ENCODE measurements at regions of chr3 and their contacts with region 1.

Region 1: DNA sequence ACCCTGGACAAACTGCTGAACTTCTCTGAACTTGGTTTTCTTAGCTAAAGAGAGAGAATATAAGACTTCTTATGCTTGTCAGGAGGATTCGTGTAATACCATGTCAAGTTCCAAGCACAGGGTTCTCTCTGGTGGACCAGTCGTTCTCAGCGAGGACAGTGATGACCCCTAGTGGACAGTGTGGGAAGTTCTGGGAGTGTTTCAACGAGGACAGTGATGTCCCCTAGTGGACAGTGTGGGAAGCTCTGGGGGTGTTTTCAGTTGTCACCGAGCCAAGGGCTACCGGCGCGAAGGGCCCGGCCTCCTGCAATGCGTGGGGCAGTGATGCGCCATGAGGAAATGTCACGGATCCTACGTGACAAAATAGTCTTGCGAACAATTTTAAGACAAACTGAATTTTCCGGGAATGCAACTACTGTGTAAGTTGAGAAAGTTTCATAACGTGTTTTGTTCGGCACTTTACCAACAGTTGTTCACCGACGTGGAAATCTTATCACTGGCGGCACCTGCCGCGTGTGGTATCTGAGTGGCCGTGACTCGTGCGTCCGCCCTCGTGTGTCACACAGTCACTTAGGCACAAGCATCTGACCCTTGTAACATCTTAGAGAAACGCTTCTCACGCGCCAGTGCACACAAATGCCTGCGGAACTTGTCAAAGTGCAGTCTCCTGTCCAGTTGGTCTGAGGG is 39.3 kb upstream of the MUC4 start:
- DNase-seq: peak; percentile 94
- ATAC-seq: peak; percentile 90
- H3K4me3 Mint-ChIP-seq: no peak overlapping the region
- H3K27ac Mint-ChIP-seq: no peak overlapping the region
- H3K4me1 Mint-ChIP-seq: peaks cover 20% of the 10 kb centered on the region
- H3K27me3 Mint-ChIP-seq: peaks cover 6% of the 10 kb centered on the region

Region 2: DNA sequence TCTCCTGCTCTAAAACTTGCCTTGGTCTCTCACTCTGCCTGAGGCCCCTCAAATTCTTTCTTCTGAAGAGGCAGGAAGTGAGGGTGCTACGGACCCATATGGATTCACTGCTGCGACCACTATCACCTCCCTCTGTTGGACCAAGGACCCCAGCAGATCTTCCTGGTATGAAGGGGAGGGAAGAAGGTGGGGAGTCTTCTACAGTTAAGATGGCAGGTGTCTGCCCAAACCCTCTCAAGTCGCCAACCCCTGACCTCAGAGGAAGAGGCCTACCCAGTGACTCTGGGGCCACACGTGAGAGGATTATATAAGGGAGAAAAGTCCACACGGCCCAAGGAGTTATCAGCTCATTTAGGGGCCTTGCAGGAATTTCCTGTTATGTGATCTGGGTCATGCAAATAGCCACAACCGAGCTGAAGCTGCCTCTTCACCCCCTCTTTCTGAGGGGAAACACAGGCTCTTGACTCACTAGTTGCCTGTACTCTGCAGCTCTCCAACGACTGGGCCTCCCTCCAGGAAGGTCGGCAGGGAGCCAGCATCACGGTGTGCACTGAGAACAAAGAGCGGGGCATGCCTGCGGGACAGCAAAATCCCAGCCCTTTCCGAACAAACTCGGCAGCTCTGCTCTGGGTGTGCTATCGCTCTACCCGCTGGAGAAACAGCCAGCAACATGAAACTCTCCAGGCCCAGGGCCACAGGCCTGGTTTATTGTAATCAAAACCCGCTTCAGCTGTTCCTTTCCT is 696.0 kb before region 1 on chr3:
- CTCF ChIA-PET with region 1: no interaction called
- DNase-seq: no peak
- ATAC-seq: no peak
- H3K4me3 Mint-ChIP-seq: no peak overlapping the region
- H3K27ac Mint-ChIP-seq: no peak overlapping the region
- H3K4me1 Mint-ChIP-seq: peaks cover 25% of the 10 kb centered on the region
- H3K27me3 Mint-ChIP-seq: no peaks in the 10 kb centered on the region

Region 3: DNA sequence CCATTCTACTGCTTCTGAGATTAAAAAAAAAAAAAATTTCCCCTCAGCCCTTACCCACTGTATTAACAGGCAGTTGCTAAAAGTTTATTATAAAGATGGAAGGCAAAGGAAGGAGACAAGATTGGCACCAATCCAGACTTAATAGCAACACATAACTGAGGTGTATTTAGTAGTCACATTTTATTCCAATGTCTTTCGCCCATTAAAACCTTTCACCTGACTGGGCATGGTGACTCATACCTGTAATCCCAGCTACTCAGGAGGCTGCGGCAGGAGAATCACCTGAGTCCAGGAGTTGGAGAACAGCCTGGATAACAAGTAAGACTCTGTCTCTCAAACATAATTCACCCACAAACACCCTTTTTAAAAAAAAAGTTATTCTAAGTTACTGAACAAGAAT is 412.6 kb before region 1 on chr3:
- CTCF ChIA-PET with region 1: no interaction called
- DNase-seq: no peak
- ATAC-seq: no peak
- H3K4me3 Mint-ChIP-seq: no peak overlapping the region
- H3K27ac Mint-ChIP-seq: no peak overlapping the region
- H3K4me1 Mint-ChIP-seq: peaks cover 25% of the 10 kb centered on the region
- H3K27me3 Mint-ChIP-seq: no peaks in the 10 kb centered on the region

Region 4: GRCh38 chr3:195794708-195795107 is 56.3 kb before region 1 on chr3:
- CTCF ChIA-PET with region 1: interaction called, 11 read pairs
- DNase-seq: no peak
- ATAC-seq: no peak
- H3K4me3 Mint-ChIP-seq: no peak overlapping the region
- H3K27ac Mint-ChIP-seq: no peak overlapping the region
- H3K4me1 Mint-ChIP-seq: peaks cover 6% of the 10 kb centered on the region
- H3K27me3 Mint-ChIP-seq: peaks cover 19% of the 10 kb centered on the region

Region 5: DNA sequence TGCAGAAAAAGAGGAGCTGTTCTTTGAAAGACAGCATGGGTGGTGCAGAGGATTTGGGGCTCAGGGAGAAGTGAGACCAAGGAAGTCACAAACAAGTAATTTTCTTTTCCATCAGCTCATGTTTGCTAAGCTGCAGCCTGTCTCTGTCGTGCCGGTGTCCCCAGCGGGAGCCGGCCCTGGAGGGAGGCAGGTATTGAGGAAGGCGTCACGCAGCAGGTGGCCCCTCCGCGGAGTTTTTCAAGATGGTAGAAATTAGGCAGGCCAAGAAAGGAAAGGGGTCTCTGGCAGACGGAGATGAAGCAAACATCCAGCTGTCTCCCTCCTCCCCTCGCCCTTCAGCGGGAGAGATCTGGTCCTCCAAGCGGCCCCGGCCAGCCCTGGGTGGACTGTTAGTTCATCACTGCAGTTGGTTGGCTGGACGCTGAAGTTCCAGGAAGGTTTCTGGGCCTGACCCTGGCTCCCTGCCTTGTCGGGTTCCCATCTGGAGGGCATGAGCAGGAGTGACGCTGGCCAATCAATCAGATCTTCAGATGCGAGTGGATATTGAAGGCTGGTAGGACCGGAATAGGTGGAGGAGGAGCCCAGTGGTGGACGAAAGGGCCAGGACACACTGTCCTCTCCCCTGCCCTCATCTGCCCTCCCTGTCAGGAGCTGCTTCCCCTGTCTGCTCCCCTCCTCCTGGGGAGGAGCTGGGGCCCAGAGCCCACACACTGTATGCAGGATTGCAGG is 11.6 kb before region 1 on chr3:
- CTCF ChIA-PET with region 1: interaction called, 48 read pairs
- DNase-seq: no peak
- ATAC-seq: no peak
- H3K4me3 Mint-ChIP-seq: no peak overlapping the region
- H3K27ac Mint-ChIP-seq: no peak overlapping the region
- H3K4me1 Mint-ChIP-seq: no peaks in the 10 kb centered on the region
- H3K27me3 Mint-ChIP-seq: peaks cover 8% of the 10 kb centered on the region

Region 6: DNA sequence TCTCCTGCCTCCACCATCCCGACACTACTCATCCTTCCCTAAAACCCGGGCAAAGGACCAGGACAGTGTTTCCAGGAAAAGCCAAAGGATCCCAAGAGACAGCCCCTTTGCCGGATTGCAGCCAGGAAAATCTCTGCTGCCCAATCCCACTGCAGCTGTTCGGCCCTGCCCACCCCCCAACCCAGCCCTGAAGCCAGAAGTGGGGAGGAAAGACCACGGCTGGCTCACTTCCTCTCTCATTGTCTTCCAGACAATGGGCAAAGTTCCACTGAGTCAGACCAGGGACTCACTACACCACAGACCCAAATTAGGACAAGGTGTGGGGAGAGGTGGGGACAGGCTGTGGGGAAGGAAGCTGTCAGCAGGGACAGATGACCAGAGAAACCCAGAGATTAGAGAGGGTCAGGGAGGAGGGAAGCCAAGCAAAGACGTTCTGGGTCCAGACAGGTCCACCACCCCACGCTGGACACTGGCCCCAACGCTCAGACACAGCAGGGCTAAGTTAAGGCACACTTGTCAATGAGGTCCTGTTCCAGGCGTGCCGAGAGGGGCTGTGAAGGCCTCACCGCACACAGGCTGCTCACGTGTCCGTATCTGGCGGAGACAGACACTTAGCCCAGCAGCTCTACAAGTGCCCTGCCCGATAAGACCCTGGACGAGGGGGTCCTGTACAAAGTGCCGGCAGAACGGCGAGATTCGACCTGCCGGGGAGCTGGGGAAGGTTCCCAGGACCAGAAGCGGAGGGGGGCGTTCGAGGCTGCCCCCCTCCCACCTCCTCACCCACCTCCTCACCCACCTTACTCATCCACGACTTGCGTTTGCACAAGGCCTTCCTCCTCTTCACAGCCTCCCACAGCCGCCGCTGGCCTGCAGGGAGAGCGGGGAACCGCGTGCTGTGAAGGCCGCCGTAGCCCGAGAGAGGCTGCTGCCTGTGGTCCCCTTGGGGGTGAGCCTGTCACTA is 35.5 kb after region 1 on chr3:
- CTCF ChIA-PET with region 1: interaction called, 192 read pairs
- DNase-seq: no peak
- ATAC-seq: no peak
- H3K4me3 Mint-ChIP-seq: no peak overlapping the region
- H3K27ac Mint-ChIP-seq: no peak overlapping the region
- H3K4me1 Mint-ChIP-seq: peaks cover 4% of the 10 kb centered on the region
- H3K27me3 Mint-ChIP-seq: no peaks in the 10 kb centered on the region

Region 7: GRCh38 chr3:195909644-195910508 is 58.9 kb after region 1 on chr3:
- CTCF ChIA-PET with region 1: interaction called, 82 read pairs
- DNase-seq: peak; percentile 91
- ATAC-seq: peak; percentile 69
- H3K4me3 Mint-ChIP-seq: peak overlapping the region; percentile 64
- H3K27ac Mint-ChIP-seq: peak overlapping the region; percentile 74
- H3K4me1 Mint-ChIP-seq: peaks cover 31% of the 10 kb centered on the region
- H3K27me3 Mint-ChIP-seq: no peaks in the 10 kb centered on the region

Region 8: GRCh38 chr3:196159952-196160804 is 309.2 kb after region 1 on chr3:
- CTCF ChIA-PET with region 1: no interaction called
- DNase-seq: peak; percentile 64
- ATAC-seq: peak; percentile 76
- H3K4me3 Mint-ChIP-seq: no peak overlapping the region
- H3K27ac Mint-ChIP-seq: peak overlapping the region; percentile 68
- H3K4me1 Mint-ChIP-seq: peaks cover 29% of the 10 kb centered on the region
- H3K27me3 Mint-ChIP-seq: no peaks in the 10 kb centered on the region